Breast epithelium (tissue), 4 donors: ENCODE measurements at regions of chr19 and their contacts with region 1.

Region 1: DNA sequence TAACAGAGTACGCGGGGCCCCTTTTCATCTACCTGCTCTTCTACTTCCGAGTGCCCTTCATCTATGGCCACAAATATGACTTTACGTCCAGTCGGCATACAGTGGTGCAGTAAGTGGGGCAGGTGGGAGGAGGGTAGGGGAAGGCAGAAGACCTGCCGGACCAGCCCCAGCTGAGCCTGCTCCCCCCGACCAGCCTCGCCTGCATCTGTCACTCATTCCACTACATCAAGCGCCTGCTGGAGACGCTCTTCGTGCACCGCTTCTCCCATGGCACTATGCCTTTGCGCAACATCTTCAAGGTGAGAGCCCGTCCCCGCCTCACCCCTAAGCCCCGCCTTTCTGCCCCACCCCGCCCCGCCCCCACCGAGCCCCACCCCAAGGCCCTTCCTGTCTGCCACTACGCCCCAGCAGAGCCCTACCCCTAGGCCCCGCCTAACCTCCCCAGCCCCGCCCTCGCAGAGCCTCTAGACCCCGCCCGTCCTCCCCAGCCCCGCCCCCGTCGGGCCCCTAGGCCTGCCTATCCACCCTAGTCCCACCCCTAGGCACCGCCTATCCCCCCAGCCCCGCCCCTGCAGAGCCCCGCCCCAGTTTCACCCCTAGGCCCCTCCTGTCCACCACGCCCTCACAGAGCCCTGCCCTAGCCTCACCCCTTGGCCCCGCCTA is 7.7 kb downstream of the NDUFB7 start:
- DNase-seq: no peak
- H3K4me3 ChIP-seq: no peak overlapping the region
- H3K27ac ChIP-seq: peak overlapping the region; percentile 7 to 92
- H3K4me1 ChIP-seq: peaks cover 18 to 30% of the 10 kb centered on the region in 2 donors
- H3K27me3 ChIP-seq: no peaks in the 10 kb centered on the region
- CTCF ChIP-seq: no peak
- POLR2A ChIP-seq: no peak

Region 2: GRCh38 chr19:14689598-14690503 is 125.7 kb after region 1 on chr19 and contains the start of gene ZNF333:
- intact Hi-C with region 1: loop called (anchors 10 kb)
- DNase-seq: peak; percentile 92 to 94
- H3K4me3 ChIP-seq: peak within 1 kb of the TSS; percentile 77 to 93 (median 82)
- H3K27ac ChIP-seq: peak within 1 kb of the TSS; percentile 93
- H3K4me1 ChIP-seq: no peaks in the 10 kb centered on the region
- H3K27me3 ChIP-seq: no peaks in the 10 kb centered on the region
- CTCF ChIP-seq: no peak
- POLR2A ChIP-seq: no peak
- total RNA-seq, gene ZNF333: 28.5 to 31.6 (median 29.4) TPM

Region 3: GRCh38 chr19:15297416-15298224 is 733.5 kb after region 1 on chr19:
- intact Hi-C with region 1: no loop called
- DNase-seq: no peak
- H3K4me3 ChIP-seq: peak overlapping the region in 1 of 3 donors; percentile 16
- H3K27ac ChIP-seq: peak overlapping the region; percentile 59 to 60
- H3K4me1 ChIP-seq: peaks cover 27 to 59% of the 10 kb centered on the region in 2 donors
- H3K27me3 ChIP-seq: no peaks in the 10 kb centered on the region
- CTCF ChIP-seq: no peak
- POLR2A ChIP-seq: no peak